ENCODE measurements at regions of chr16 and their contacts with region 1.

Region 1: DNA sequence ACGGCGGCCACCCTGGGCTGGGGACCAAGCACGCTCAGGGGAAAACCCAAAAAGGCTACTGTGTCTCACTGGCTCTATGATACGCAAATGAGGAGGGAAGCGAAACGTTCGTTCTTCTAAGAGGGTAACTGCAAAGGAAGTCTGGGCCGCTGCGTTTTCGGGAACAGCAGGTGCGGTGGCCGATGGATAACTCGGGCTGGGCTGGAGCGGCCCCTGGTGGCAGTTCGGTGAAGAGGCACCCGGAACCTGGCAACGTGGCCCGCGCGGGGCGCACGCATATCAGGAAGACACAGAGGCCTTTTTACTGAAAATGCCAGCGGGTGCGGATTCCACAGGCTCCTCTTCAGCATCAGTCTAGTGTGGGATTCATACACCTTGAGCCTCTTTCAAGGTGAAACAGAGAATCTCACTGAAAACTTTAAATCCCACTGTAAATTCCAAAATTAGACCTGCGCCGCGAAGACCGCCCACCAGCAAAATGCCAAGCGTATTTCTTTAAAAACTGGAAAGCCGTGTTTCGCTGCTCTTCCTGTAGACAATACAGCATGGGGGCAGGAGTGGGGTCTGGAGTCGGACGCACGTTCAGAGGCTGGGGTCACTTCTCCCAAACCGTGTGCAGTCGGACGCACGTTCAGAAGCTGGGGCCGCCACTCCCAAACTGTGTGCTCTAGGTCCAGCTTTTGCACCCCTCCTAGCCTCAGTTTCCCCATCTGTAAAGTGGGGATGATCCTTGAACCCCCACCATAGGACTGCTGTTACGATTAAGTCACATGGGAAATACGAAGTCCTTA is 44.4 kb upstream of the METTL9 start:
- DNase-seq: peak; percentile 70
- H3K4me3 ChIP-seq: peak overlapping the region in 1 of 3 experiments; percentile 10
- H3K27ac ChIP-seq: no peak overlapping the region
- H3K4me1 ChIP-seq: peaks cover 7% of the 10 kb centered on the region
- H3K27me3 ChIP-seq: no peaks in the 10 kb centered on the region
- CTCF ChIP-seq: peak; percentile 93 to 99

Region 2: GRCh38 chr16:21158208-21159110 is 396.5 kb before region 1 on chr16 and contains the start of gene LDAF1:
- CTCF ChIA-PET with region 1: no interaction called
- dilution Hi-C with region 1: no loop called
- in situ Hi-C with region 1: no loop called
- intact Hi-C with region 1: loop called (anchors 2 kb)
- DNase-seq: peak; percentile 83
- H3K4me3 ChIP-seq: peak within 1 kb of the TSS; percentile 74 to 76 (median 76)
- H3K27ac ChIP-seq: peak within 1 kb of the TSS; percentile 74
- H3K4me1 ChIP-seq: peaks cover 14% of the 10 kb centered on the region
- H3K27me3 ChIP-seq: no peaks in the 10 kb centered on the region
- CTCF ChIP-seq: no peak
- total RNA-seq, gene LDAF1: 43.5 to 131 TPM

Region 3: DNA sequence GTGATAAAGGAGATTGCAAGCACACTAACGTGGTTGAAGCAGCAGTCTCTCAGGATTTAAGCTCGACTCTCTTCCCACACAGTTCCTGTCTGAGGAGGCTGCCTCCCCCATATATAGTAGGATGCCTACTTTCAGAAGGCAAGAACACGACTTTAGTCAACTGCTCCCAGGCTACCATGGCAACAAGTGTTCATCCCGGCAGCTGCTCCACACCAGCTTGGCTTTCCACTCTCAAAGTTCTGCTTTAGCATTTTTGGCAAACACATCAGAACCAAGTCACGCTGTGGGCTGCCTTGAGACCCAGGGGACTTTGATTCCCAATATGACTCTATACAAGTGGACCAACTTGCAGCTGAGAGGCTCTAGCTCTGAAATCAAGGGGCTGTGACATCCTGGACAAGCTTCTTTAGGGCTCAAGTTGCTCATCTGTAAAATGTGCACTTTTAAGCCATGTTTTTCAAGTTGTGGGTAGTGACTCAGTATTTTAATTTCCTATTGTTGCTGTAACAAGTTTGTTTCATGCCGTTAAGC is 360.2 kb before region 1 on chr16:
- CTCF ChIA-PET with region 1: no interaction called
- dilution Hi-C with region 1: no loop called
- in situ Hi-C with region 1: loop called in 1 of 2 experiments (anchors 25 kb)
- intact Hi-C with region 1: no loop called
- DNase-seq: peak; percentile 39
- H3K4me3 ChIP-seq: no peak overlapping the region
- H3K27ac ChIP-seq: no peak overlapping the region
- H3K4me1 ChIP-seq: no peaks in the 10 kb centered on the region
- H3K27me3 ChIP-seq: no peaks in the 10 kb centered on the region
- CTCF ChIP-seq: no peak

Region 4: GRCh38 chr16:21300309-21301167 is 254.5 kb before region 1 on chr16:
- CTCF ChIA-PET with region 1: no interaction called
- dilution Hi-C with region 1: no loop called
- in situ Hi-C with region 1: no loop called
- intact Hi-C with region 1: loop called (anchors 10 kb)
- DNase-seq: peak; percentile 100
- H3K4me3 ChIP-seq: peak overlapping the region; percentile 57 to 82 (median 68)
- H3K27ac ChIP-seq: peak overlapping the region; percentile 98
- H3K4me1 ChIP-seq: peaks cover 13% of the 10 kb centered on the region
- H3K27me3 ChIP-seq: no peaks in the 10 kb centered on the region
- CTCF ChIP-seq: peak; percentile 85 to 93

Region 5: DNA sequence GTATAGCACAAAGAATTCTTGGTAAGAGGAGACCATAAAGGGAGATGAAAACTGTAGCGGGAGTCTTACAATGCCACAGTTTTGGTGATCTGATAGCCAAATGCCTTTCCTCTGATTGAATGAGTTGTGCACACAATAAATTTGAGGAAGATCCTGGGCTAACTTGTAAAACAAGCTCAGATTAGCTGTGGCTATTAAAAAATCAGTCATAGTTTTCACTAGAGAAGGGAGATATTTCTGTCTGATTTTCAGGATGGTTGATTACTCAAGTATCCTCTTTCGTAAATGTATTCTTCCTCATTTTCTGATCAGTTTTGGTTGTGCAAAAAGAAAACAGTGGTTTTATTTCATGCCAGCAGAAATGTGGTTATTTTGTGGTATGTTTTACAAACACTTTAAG is 35.3 kb after region 1 on chr16:
- CTCF ChIA-PET with region 1: no interaction called
- dilution Hi-C with region 1: no loop called
- in situ Hi-C with region 1: no loop called
- intact Hi-C with region 1: no loop called
- DNase-seq: no peak
- H3K4me3 ChIP-seq: no peak overlapping the region
- H3K27ac ChIP-seq: no peak overlapping the region
- H3K4me1 ChIP-seq: no peaks in the 10 kb centered on the region
- H3K27me3 ChIP-seq: no peaks in the 10 kb centered on the region
- CTCF ChIP-seq: no peak

Region 6: DNA sequence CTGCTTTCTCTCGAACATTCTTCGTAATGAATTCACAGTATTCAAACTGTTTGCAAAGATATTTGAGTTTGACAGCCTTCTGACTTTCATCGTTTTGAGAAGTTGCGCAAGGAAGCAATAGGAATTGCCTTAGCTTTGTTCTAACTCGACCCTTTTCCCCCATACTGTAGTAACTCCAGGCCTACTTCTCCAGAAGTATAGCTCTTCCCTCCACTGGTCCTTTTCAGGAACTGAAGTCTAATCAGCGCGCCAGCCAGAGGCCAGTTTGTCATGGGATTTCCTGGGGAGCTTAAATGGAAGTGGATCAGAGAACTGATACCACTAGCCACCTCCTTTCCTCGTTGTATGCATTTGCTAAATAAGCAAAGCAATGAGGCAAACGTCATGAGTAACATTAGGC is 791.5 kb after region 1 on chr16:
- CTCF ChIA-PET with region 1: no interaction called
- dilution Hi-C with region 1: no loop called
- in situ Hi-C with region 1: loop called in 1 of 2 experiments (anchors 25 kb)
- intact Hi-C with region 1: no loop called
- DNase-seq: no peak
- H3K4me3 ChIP-seq: no peak overlapping the region
- H3K27ac ChIP-seq: peak overlapping the region; percentile 96
- H3K4me1 ChIP-seq: peaks cover 38% of the 10 kb centered on the region
- H3K27me3 ChIP-seq: no peaks in the 10 kb centered on the region
- CTCF ChIP-seq: no peak